Cardiac septum (tissue), 1 donor: ENCODE measurements at regions of chr6 and their contacts with region 1.

Region 1: GRCh38 chr6:122399384-122400158 is at the start of gene HSF2:
- DNase-seq: peak; percentile 99
- total RNA-seq, gene HSF2: 16.8 TPM

Region 2: DNA sequence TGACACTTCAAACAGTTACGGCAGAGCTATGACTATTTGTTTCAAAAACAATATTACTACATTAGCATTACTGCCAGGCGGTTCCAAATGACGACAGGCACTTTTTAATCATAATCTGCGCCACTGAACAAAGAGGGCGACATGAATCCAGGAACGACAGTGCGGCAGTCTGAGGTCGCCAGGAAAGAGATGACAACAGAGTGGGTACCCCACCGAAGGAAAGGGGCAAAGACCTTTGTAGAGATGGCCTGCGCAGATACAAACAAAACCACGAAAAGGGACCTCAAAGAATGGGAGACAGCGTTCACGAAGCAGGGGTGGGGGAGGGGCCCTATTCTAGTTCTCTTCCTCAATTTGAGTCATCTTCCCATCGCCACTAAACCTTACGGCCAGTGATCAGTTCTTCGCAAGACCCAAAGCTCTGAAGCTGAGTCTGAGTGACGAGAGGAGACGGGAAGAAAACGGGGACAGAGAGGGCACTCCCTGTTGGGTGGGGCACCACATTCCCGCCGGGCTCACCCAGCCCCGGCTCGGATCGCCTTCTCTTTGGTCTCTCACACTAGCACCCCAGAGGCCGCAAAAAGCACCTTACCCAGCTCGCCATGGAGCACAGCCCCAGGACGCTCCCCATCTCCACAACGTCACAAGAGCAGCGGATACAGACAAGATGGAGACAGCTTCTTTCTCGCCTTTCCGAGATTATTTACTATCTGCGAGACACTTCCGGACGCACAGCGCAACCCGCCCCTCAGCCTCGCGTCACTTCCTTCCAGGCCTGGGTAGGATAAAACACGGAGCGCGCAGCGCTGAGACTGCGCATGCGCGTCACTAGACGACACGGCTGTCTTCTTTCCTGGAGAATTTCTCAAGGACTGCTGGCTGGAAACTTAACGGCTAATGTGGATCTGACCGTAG is 71.8 kb after region 1 on chr6 and contains the start of gene SERINC1:
- intact Hi-C with region 1: loop called (anchors 1 kb)
- DNase-seq: peak; percentile 97
- total RNA-seq, gene SERINC1: 192 TPM